B cell (primary cell): ENCODE measurements at regions of chr1 and their contacts with region 1.

Region 1: GRCh38 chr1:150629115-150629928 is at the start of gene ENSA:
- DNase-seq: peak; percentile 99
- ATAC-seq: peak; percentile 85
- H3K4me3 ChIP-seq: peak within 1 kb of the TSS; percentile 74 to 93 (median 80)
- H3K4me3 Mint-ChIP-seq: no peak within 1 kb of the TSS
- H3K27ac ChIP-seq: peak within 1 kb of the TSS; percentile 95 to 96
- H3K27ac Mint-ChIP-seq: no peak within 1 kb of the TSS
- H3K4me1 ChIP-seq: peaks cover 19 to 21% of the 10 kb centered on the region in 2 donors
- H3K4me1 Mint-ChIP-seq: peaks cover 18% of the 10 kb centered on the region
- H3K27me3 ChIP-seq: no peaks in the 10 kb centered on the region
- H3K27me3 Mint-ChIP-seq: no peaks in the 10 kb centered on the region
- CTCF ChIP-seq: no peak
- total RNA-seq, gene ENSA: 115 and 119 TPM in 2 replicates

Region 2: DNA sequence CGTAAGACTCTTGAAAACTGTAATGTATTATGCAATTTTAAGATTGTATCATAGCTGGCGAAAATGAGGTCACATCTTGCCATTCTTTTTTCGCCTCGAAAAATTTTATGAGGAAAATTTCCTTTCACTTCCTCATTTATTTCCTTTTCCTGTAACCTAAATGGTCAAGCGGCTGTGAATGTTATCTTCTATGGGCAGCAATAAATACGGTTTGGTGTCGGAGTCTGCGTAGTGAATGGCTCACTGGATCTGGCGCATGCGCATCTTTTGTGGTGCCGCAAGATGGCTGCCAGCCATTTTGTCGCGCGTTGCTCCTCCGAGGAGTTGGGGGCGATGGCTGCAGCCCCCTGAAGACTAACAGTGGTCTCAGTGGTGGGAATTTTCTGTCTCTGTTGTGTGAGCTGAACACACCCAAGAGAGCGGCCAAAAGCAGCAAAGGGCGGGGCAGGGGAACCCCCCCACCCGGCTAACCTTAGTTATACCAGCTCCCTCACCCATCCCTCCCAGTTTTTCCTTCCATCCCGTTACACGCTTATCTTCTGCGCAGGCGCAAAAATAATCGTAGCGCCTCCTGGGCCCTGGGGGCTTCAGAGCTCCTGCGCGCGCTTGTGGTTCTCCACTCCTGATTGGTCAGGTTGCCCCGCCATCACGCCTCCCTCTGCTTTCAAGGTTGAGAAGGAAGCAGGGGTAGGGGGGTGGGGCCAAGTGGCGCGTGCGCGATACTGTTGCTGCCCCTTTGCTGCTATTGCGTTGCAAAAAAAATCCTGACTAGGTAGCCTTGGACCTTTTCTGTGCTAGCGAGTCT is 265.7 kb before region 1 on chr1 and contains the start of gene RPRD2:
- CTCF ChIA-PET with region 1: no interaction called
- POLR2A ChIA-PET with region 1: no interaction called
- intact Hi-C with region 1: loop called (anchors 2 kb)
- DNase-seq: peak; percentile 99
- ATAC-seq: peak; percentile 94
- H3K4me3 ChIP-seq: peak within 1 kb of the TSS; percentile 74 to 99 (median 90)
- H3K4me3 Mint-ChIP-seq: peak within 1 kb of the TSS; percentile 99
- H3K27ac ChIP-seq: peak within 1 kb of the TSS; percentile 87 to 90
- H3K27ac Mint-ChIP-seq: peak within 1 kb of the TSS; percentile 99
- H3K4me1 ChIP-seq: peaks cover 21 to 24% of the 10 kb centered on the region in 2 donors
- H3K4me1 Mint-ChIP-seq: peaks cover 31% of the 10 kb centered on the region
- H3K27me3 ChIP-seq: no peaks in the 10 kb centered on the region
- H3K27me3 Mint-ChIP-seq: no peaks in the 10 kb centered on the region
- CTCF ChIP-seq: no peak
- total RNA-seq, gene RPRD2: 49.1 and 51.4 TPM in 2 replicates

Region 3: DNA sequence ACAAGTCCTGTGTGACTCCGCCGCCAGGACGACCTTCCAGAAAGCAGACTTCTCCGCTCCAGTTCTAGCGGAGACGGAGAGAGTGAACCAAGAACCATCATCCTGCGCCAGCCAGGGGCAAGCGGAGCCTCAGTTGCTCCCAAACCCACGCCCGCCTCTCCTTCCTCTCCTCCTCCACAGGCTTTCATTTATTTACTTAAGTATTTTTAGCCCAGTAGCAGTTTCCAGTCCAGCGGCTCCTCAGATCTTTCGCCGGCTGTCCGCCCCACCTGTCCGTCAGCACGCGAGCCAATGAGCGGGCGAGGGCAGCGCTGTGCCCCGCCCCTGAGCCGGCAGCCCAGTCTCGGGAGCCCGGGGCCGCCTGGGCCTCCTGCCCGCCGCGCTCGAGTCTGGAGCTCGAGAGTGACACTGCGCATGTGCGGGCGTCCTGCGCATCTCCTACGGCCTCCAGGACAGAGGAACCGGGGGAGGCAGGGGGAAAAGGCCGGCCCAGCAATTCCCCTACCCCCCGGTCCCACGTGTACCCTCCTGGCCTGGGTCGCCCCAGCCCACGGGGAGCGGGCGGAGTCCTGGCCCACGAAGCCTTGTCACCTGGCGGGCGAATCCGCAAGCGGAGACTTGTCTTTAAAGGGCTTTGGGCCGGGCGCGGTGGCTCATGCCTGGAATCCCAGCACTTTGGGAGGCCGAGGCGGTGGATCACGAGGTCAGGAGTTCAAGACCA is 113.8 kb before region 1 on chr1 and contains the start of gene FALEC:
- CTCF ChIA-PET with region 1: no interaction called
- POLR2A ChIA-PET with region 1: interaction called, 5 read pairs
- intact Hi-C with region 1: loop called (anchors 1 kb)
- DNase-seq: peak; percentile 94
- ATAC-seq: peak; percentile 99
- H3K4me3 ChIP-seq: peak within 1 kb of the TSS; percentile 50 to 86 (median 80)
- H3K4me3 Mint-ChIP-seq: peak within 1 kb of the TSS; percentile 90
- H3K27ac ChIP-seq: peak within 1 kb of the TSS; percentile 59 to 78
- H3K27ac Mint-ChIP-seq: peak within 1 kb of the TSS; percentile 83
- H3K4me1 ChIP-seq: peaks cover 22 to 26% of the 10 kb centered on the region in 2 donors
- H3K4me1 Mint-ChIP-seq: peaks cover 25% of the 10 kb centered on the region
- H3K27me3 ChIP-seq: no peaks in the 10 kb centered on the region
- H3K27me3 Mint-ChIP-seq: no peaks in the 10 kb centered on the region
- CTCF ChIP-seq: no peak
- total RNA-seq, gene FALEC: 2.0 and 2.6 TPM in 2 replicates

Region 4: DNA sequence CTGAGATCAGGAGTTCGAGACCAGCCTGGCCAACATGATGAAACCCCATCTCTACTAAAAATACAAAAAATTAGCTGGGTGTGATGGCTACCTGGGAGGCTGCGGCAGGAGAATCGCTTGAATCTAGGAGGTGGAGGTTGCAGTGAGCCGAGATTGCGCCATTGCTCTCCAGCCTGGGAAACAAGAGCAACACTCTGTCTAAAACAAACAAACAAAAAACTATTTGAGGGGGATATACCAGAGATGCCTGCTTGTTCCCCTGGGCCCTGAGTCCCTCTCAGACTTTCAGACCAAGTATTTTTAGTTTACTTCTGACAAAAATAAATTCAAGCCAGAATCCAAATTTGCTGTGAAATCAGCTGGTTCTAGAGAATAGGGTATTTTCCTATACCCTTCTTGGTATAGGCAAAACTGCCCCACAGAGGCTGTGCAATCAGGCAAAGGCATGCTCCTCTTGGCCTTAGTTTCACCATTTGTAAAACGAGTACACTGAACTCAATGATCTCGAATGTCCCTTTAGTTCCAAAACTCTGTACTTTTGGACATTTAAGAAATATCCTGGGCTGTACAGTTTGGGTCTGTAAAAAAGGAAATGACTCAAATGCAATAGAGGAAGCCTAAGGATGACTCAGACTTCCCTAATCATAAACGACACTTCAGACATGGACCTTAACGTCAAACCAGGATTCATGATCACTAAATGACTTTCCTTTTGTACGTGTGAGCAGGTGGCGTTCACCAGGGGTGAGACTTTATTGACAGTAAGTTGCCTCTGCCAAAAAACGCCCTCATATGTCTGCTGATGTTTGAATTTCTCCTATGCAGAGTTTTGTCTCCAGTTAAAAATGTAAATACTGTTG is 16.0 kb before region 1 on chr1:
- CTCF ChIA-PET with region 1: interaction called, 25 read pairs
- POLR2A ChIA-PET with region 1: interaction called, 7 read pairs
- intact Hi-C with region 1: loop called (anchors 1 kb)
- DNase-seq: peak; percentile 74
- ATAC-seq: peak; percentile 55
- H3K4me3 ChIP-seq: no peak overlapping the region
- H3K4me3 Mint-ChIP-seq: peak overlapping the region; percentile 72
- H3K27ac ChIP-seq: peak overlapping the region; percentile 44 to 95
- H3K27ac Mint-ChIP-seq: peak overlapping the region; percentile 92
- H3K4me1 ChIP-seq: peaks cover 35 to 41% of the 10 kb centered on the region in 2 donors
- H3K4me1 Mint-ChIP-seq: peaks cover 44% of the 10 kb centered on the region
- H3K27me3 ChIP-seq: no peaks in the 10 kb centered on the region
- H3K27me3 Mint-ChIP-seq: no peaks in the 10 kb centered on the region
- CTCF ChIP-seq: no peak

Region 5: GRCh38 chr1:150765296-150765976 is 136.1 kb after region 1 on chr1 and contains the start of gene CTSS:
- CTCF ChIA-PET with region 1: no interaction called
- POLR2A ChIA-PET with region 1: no interaction called
- intact Hi-C with region 1: loop called (anchors 5 kb)
- DNase-seq: peak; percentile 86
- ATAC-seq: peak; percentile 87
- H3K4me3 ChIP-seq: peak within 1 kb of the TSS; percentile 62 to 99 (median 80)
- H3K4me3 Mint-ChIP-seq: peak within 1 kb of the TSS; percentile 96
- H3K27ac ChIP-seq: peak within 1 kb of the TSS; percentile 85 to 97
- H3K27ac Mint-ChIP-seq: peak within 1 kb of the TSS; percentile 97
- H3K4me1 ChIP-seq: peaks cover 36 to 40% of the 10 kb centered on the region in 2 donors
- H3K4me1 Mint-ChIP-seq: peaks cover 45% of the 10 kb centered on the region
- H3K27me3 ChIP-seq: no peaks in the 10 kb centered on the region
- H3K27me3 Mint-ChIP-seq: no peaks in the 10 kb centered on the region
- CTCF ChIP-seq: no peak
- total RNA-seq, gene CTSS: 221 and 241 TPM in 2 replicates